ENCODE measurements at regions of chr22 and their contacts with region 1.

Region 1: DNA sequence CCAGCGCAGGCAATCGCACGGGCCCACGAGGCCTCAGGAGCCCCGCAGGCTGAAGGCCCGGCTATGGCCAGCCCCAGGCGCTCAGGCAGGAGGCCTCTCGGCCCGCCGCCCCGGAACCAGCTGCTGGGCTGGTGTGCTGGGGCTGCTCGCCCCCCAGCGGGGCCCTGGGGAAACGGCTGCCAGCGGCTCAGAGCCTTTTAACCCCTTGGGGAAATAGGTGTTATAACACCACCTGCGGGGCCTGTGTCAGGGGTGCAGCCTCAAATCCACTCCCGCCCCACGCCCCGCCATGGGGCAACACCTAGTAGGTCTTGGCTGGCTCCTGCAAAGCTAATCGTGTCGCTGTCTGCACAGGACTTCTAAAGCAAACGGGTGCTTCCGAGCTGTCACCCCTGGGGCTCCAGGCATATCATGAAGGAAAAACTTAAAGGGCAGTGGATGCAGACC is 237.4 kb downstream of the TTC28 start:
- DNase-seq: peak; percentile 93
- H3K4me3 Mint-ChIP-seq: peak overlapping the region; percentile 86
- H3K27ac Mint-ChIP-seq: peak overlapping the region; percentile 81
- H3K4me1 Mint-ChIP-seq: peaks cover 20% of the 10 kb centered on the region
- H3K27me3 Mint-ChIP-seq: peaks cover 19% of the 10 kb centered on the region

Region 2: DNA sequence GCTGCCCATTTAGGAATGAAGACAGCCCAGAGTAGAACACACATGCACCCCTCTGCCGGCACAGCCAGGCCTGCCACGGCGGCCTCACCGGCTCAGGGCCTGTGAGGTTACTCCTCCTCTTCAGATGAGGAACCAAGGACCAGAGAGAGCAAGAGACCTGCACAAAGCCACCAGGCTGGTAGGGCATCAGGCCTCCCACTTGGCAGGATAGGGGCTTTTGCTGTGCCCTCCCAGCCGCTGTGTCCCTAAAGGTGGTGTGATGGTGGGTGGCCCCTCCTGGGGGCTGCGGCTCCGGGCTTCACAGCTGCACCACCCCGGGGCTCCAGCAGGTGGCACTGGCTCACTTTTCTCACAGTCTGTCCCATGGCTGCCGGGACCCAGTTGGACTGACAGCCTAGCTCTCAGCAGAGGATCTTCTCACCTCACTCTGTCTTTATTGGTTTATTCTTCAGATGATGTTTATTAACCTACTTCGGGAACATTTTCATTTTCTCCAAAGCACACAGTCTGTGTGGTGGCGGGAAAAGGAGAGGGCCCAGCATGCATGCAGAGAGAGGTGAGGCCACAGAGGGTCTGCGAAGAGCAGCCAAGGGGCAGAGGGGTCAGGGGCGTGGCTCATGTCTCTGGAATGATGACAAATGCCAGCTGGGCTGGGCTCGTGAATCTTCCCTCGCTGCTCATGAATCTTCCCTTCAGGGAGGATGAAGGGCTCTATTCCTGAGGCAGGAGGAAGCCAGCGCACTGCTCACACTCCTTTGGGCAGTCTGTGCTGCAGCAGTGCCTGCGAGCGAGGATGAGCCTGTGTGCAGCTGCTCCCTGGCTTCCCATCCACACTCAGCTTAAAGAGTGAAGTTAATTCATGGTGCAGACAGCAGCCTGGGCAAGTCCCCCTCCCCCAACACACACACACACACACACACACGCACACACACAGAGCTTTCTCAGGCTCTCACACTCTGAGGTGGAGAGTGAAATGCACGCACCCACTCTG is 422.1 kb before region 1 on chr22:
- intact Hi-C with region 1: loop called (anchors 1 kb)
- DNase-seq: peak; percentile 89
- H3K4me3 Mint-ChIP-seq: no peak overlapping the region
- H3K27ac Mint-ChIP-seq: no peak overlapping the region
- H3K4me1 Mint-ChIP-seq: peaks cover 2% of the 10 kb centered on the region
- H3K27me3 Mint-ChIP-seq: no peaks in the 10 kb centered on the region

Region 3: DNA sequence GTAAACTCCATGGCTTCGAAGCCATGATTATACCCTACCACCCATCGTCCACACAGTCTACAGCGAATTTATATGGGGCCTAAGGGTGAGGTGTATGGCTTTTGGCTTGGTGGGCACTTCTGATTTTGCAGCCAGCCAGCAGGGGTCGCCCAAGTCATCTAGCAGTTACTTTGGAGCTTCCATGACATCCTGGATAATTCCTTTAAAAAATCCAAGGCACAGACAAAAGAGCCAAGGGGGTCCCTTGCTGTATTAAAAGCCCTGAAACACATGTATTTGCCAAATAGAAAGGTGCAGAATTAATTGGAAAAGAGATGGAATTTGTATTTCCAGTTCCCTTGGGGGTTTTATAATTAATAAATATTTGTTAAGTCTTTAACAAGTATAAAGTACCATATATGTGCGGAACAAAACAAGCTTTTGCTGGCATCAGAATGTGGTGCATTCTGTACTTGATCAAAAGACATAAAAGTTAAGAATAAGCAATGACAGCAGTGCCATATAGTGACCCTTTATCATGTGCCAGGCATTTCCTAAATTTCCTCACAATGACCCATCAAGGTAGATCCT is 390.4 kb before region 1 on chr22:
- intact Hi-C with region 1: loop called (anchors 2 kb)
- DNase-seq: peak; percentile 72
- H3K4me3 Mint-ChIP-seq: no peak overlapping the region
- H3K27ac Mint-ChIP-seq: no peak overlapping the region
- H3K4me1 Mint-ChIP-seq: no peaks in the 10 kb centered on the region
- H3K27me3 Mint-ChIP-seq: no peaks in the 10 kb centered on the region

Region 4: DNA sequence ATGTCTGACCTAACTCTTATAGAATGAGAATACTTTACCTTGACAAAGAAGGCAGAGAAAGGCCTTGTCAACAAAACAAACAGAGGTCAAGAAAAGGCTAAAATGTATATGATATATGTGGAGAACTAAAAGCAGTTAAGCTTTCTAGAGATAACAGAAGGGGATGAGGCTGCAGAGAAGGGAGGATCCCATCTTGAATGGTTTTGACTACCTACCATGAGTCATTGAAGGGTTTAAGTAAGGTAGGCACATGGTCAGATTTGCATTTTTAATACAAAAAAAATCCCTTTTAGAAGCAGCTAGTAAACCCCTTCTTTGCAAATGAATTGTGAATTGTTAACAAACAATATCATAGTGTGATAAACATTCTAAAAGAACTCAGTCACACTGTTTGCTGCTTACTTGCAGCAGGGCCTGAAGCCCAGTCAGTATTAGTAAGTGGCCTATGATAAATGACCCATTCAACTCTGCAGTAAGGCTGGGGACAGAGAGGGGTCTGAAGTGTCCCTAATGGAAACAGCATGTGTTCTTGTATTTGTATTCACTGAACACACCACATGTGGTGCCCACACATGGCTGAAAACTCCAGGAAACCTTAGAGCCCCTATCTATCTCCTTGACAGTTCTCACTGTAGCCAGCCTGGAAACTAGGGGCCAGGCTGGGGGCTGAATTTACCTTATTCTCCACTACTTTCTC is 194.5 kb before region 1 on chr22:
- intact Hi-C with region 1: loop called (anchors 1 kb)
- DNase-seq: no peak
- H3K4me3 Mint-ChIP-seq: no peak overlapping the region
- H3K27ac Mint-ChIP-seq: no peak overlapping the region
- H3K4me1 Mint-ChIP-seq: no peaks in the 10 kb centered on the region
- H3K27me3 Mint-ChIP-seq: peaks cover 4% of the 10 kb centered on the region

Region 5: DNA sequence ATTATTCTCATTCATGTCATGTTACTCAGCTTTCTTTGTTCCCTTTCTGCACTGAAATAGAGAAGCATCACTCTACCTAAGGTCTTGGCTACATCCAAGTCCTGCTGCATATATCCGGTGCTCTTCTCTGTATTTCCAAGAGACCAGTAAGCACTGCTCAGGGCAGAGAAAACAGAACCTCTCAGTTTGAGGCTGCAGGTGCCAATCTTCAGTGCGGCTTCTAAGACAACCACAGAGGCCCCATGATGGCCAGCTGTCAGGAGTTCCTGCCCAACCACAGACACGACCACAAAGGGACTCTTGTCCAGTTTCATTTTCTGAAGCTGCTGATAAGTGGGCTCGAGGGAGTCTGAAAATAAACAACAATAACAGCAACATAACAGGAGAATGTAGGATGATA is 144.8 kb before region 1 on chr22:
- intact Hi-C with region 1: loop called (anchors 5 kb)
- DNase-seq: no peak
- H3K4me3 Mint-ChIP-seq: no peak overlapping the region
- H3K27ac Mint-ChIP-seq: no peak overlapping the region
- H3K4me1 Mint-ChIP-seq: peaks cover 16% of the 10 kb centered on the region
- H3K27me3 Mint-ChIP-seq: no peaks in the 10 kb centered on the region

Region 6: DNA sequence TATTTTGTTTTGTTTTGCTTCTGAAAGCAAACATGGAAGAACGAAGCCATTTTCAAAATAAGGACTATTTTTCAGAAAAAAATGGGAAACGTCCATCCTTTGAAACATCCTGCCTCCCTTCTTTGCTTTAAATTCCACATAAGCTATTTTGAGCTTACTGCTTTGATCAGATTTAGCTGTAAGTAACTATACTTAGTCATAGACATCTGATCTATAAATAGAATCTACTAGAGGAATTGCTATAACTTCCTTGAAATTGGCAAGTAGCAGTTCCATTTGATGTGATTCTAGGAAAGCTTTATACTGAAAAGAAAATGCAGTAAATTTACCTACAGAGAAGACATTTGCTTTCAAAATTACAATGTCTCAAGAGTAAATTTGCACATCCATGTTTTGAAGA is 68.5 kb before region 1 on chr22:
- intact Hi-C with region 1: loop called (anchors 5 kb)
- DNase-seq: no peak
- H3K4me3 Mint-ChIP-seq: peak overlapping the region; percentile 16
- H3K27ac Mint-ChIP-seq: no peak overlapping the region
- H3K4me1 Mint-ChIP-seq: peaks cover 48% of the 10 kb centered on the region
- H3K27me3 Mint-ChIP-seq: no peaks in the 10 kb centered on the region

Region 7: DNA sequence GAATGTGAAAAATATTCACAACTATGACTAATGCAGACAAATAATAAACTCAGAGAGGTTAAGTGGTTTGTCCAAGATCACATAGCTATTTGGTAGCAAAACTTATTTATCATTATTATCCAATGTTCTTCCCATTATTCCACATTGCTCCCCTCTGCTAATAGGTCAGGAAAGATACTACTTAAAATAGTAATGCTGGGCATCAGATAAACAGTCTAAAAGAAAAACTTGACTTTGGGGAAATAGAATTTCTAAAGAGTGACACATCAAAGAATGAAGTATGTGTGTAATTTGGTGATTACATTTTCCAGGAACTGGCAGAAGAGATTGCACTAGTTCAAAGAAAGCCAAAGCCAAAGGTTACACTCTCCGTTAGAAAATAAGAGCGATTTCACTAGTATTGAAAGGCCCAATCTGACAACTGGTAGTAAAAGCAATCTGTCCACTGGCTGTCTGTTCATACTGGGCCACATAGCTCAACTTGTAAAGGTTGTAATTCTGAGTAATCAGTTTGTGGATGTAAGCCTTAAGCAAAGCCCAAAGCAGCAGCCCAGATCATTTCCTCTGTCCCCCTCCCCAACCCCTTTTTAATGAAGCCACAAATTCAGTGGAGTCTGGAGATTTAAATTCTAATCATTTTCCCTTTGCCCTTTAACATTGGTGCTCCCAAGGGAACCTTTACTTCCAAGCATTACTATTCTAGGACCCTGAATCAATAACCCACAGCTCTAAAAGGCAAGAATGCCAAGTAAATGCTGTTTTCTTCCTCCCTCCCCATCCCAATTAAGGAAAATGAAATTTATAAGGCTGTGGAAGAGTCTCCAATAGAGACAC is 46.1 kb before region 1 on chr22:
- intact Hi-C with region 1: loop called (anchors 5 kb)
- DNase-seq: peak; percentile 68
- H3K4me3 Mint-ChIP-seq: peak overlapping the region; percentile 8
- H3K27ac Mint-ChIP-seq: peak overlapping the region; percentile 75
- H3K4me1 Mint-ChIP-seq: peaks cover 38% of the 10 kb centered on the region
- H3K27me3 Mint-ChIP-seq: peaks cover 1% of the 10 kb centered on the region

Measured in activated CD4-positive, alpha-beta T cell treated with anti-CD3 and anti-CD28 coated beads, Interleukin-2, amount 10 ng/mL, durations not matched to agents 24 days and 14 days (primary cell).